Activated naive CD4-positive, alpha-beta T cell treated with anti-CD3 and anti-CD28 coated beads for 36 hours (primary cell): ENCODE measurements at regions of chr22 and their contacts with region 1.

Region 1: DNA sequence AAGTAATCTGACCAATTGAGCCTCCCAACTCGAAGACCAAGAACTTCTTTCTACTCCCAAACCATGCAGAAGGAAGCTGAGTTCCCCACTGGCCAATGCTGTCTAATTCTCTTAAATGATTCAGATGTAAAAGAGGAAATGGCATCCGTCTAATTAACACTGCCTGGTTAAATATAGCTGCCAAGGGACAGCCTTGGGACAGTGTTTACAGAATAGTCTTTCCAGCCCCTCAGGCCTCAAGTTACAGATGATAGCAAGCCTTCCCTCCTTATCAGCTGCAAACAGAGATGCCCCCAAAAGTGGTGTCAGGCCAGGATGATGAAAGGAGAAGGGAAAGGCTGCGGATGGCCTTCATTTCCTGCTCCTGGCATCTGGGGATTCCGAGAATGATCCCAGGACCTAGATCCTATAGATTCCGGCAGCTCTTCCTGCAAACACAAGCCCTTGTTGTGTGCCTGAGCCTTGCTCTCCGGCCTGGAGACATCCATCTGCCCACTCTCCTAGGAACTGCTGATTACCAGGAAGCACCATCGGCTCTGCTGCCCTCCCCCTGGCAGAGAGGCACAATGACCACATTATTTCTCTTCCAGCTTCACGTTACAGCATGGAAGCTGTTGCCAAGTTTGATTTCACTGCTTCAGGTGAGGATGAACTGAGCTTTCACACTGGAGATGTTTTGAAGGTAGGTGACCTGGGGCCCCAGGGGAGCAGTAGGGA is 13.5 kb upstream of the TMA7B start:
- DNase-seq: no peak
- H3K4me3 Mint-ChIP-seq: peak overlapping the region; percentile 53
- H3K27ac Mint-ChIP-seq: peak overlapping the region; percentile 95
- H3K4me1 Mint-ChIP-seq: peaks cover 99% of the 10 kb centered on the region
- H3K27me3 Mint-ChIP-seq: no peaks in the 10 kb centered on the region

Region 2: DNA sequence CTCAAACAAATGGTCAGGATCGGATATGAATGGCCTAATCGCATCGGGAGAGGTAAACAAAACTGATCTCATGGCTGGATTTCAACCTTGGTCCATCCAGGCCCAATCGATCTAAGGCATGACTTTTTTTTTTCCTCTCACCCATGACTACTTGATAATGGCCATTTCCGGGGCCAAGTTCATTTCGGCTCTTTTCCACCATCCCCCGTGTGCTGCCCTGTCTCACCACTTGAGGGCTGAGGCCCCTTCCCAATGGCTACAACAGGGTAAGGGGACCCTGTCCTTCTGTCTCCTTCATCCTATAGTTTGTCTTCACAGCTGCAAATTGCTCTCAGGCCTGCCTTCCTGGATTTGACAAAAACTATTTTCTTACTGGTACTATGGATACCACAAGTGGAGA is 19.1 kb before region 1 on chr22:
- CTCF ChIA-PET with region 1: interaction called, 23 read pairs
- intact Hi-C with region 1: no loop called
- DNase-seq: peak; percentile 69
- H3K4me3 Mint-ChIP-seq: no peak overlapping the region
- H3K27ac Mint-ChIP-seq: no peak overlapping the region
- H3K4me1 Mint-ChIP-seq: peaks cover 33% of the 10 kb centered on the region
- H3K27me3 Mint-ChIP-seq: no peaks in the 10 kb centered on the region

Region 3: GRCh38 chr22:39932918-39933649 is 13.6 kb before region 1 on chr22:
- CTCF ChIA-PET with region 1: interaction called, 23 read pairs
- intact Hi-C with region 1: no loop called
- DNase-seq: peak; percentile 81
- H3K4me3 Mint-ChIP-seq: peak overlapping the region; percentile 78
- H3K27ac Mint-ChIP-seq: no peak overlapping the region
- H3K4me1 Mint-ChIP-seq: peaks cover 48% of the 10 kb centered on the region
- H3K27me3 Mint-ChIP-seq: no peaks in the 10 kb centered on the region

Region 4: GRCh38 chr22:39994566-39995392 is 48.1 kb after region 1 on chr22 and contains the start of gene FAM83F:
- CTCF ChIA-PET with region 1: no interaction called
- intact Hi-C with region 1: loop called (anchors 2 kb)
- DNase-seq: peak; percentile 23
- H3K4me3 Mint-ChIP-seq: peak within 1 kb of the TSS; percentile 67
- H3K27ac Mint-ChIP-seq: no peak within 1 kb of the TSS
- H3K4me1 Mint-ChIP-seq: peaks cover 11% of the 10 kb centered on the region
- H3K27me3 Mint-ChIP-seq: peaks cover 3% of the 10 kb centered on the region
- total RNA-seq, gene FAM83F: 1.8 to 1.9 TPM